SK-N-SH (cell line): ENCODE measurements at regions of chr7 and their contacts with region 1.

Region 1: GRCh38 chr7:25389489-25390106 is 161.3 kb upstream of the NPVF start:
- DNase-seq: peak; percentile 68
- H3K4me3 ChIP-seq: no peak overlapping the region
- H3K27ac ChIP-seq: no peak overlapping the region
- H3K4me1 ChIP-seq: peaks cover 0 to 20% of the 10 kb centered on the region in 2 experiments; a peak in 2 of 4 replicates
- H3K27me3 ChIP-seq: no peaks in the 10 kb centered on the region
- CTCF ChIP-seq: peak; percentile 73
- EP300 ChIP-seq: no peak
- RAD21 ChIP-seq: peak; percentile 88

Region 2: DNA sequence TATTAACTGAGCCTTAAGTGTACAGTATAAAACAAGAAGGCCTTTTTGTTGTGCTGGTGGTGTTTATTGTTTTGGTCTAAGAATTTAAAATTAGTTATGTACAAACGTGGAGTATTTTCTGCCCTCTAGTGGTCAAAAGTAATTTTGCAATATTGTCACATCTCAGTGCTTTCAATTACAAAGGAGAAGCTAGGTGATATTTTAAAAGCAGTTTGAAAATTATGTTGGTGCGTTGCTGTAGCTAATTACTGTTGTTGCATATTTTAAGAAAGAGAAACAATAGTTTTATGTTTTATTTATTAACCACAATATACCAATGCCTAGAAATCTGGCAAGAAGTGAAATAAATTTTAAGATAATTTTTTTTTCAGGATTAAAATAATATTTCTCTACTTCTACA is 172.8 kb before region 1 on chr7:
- CTCF ChIA-PET with region 1: interaction called, 15 read pairs
- POLR2A ChIA-PET with region 1: no interaction called
- DNase-seq: peak; percentile 48
- H3K4me3 ChIP-seq: no peak overlapping the region; a peak in 1 of 4 replicates
- H3K27ac ChIP-seq: no peak overlapping the region
- H3K4me1 ChIP-seq: peaks cover 0 to 2% of the 10 kb centered on the region in 2 experiments; a peak in 1 of 4 replicates
- H3K27me3 ChIP-seq: peaks cover 8% of the 10 kb centered on the region; the same call in 1 of the 2 replicates
- CTCF ChIP-seq: peak; percentile 99
- EP300 ChIP-seq: no peak
- RAD21 ChIP-seq: peak; percentile 49; the same call in 1 of the 2 replicates

Region 3: GRCh38 chr7:25259587-25260243 is 129.9 kb before region 1 on chr7:
- CTCF ChIA-PET with region 1: interaction called, 526 read pairs
- POLR2A ChIA-PET with region 1: no interaction called
- DNase-seq: peak; percentile 79
- H3K4me3 ChIP-seq: peak overlapping the region in 1 of 2 experiments; percentile 15; a peak in 1 of 4 replicates
- H3K27ac ChIP-seq: no peak overlapping the region
- H3K4me1 ChIP-seq: peaks cover 0 to 4% of the 10 kb centered on the region in 2 experiments; a peak in 2 of 4 replicates
- H3K27me3 ChIP-seq: peaks cover 10% of the 10 kb centered on the region; the same call in 1 of the 2 replicates
- CTCF ChIP-seq: peak; percentile 94
- EP300 ChIP-seq: no peak
- RAD21 ChIP-seq: peak; percentile 99

Region 4: GRCh38 chr7:25369786-25370185 is 19.8 kb before region 1 on chr7:
- CTCF ChIA-PET with region 1: interaction called, 61 read pairs
- POLR2A ChIA-PET with region 1: no interaction called
- DNase-seq: no peak
- H3K4me3 ChIP-seq: no peak overlapping the region
- H3K27ac ChIP-seq: no peak overlapping the region
- H3K4me1 ChIP-seq: no peaks in the 10 kb centered on the region; a peak in 1 of 4 replicates
- H3K27me3 ChIP-seq: no peaks in the 10 kb centered on the region; the same call in 1 of the 2 replicates
- CTCF ChIP-seq: no peak
- EP300 ChIP-seq: no peak
- RAD21 ChIP-seq: no peak

Region 5: DNA sequence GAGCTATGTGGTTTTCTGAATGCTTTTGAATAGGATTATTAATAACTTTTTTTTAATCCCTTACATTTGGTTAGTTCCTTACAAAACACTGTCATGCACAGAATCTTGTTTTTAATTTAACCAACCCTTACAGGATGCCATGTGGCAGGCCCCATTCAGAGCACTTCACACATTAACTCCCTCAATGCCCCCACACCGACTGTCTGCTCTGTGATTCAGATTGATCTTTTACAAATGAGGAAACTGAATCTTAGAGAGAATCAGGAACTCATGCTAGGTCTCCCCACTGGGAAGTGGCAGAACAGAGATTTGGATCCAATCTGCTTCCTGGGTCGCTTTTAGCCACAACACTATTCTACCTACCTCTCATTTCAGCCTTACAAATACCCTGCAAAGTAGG is 34.5 kb after region 1 on chr7:
- CTCF ChIA-PET with region 1: interaction called, 11 read pairs
- POLR2A ChIA-PET with region 1: no interaction called
- DNase-seq: no peak
- H3K4me3 ChIP-seq: no peak overlapping the region
- H3K27ac ChIP-seq: no peak overlapping the region
- H3K4me1 ChIP-seq: peaks cover 0 to 2% of the 10 kb centered on the region in 2 experiments; a peak in 1 of 4 replicates
- H3K27me3 ChIP-seq: no peaks in the 10 kb centered on the region
- CTCF ChIP-seq: no peak
- EP300 ChIP-seq: no peak
- RAD21 ChIP-seq: no peak

Region 6: GRCh38 chr7:25557379-25557917 is 167.8 kb after region 1 on chr7:
- CTCF ChIA-PET with region 1: interaction called, 766 read pairs
- POLR2A ChIA-PET with region 1: interaction called, 3 read pairs
- DNase-seq: no peak
- H3K4me3 ChIP-seq: no peak overlapping the region
- H3K27ac ChIP-seq: no peak overlapping the region
- H3K4me1 ChIP-seq: peaks cover 0 to 3% of the 10 kb centered on the region in 2 experiments; a peak in 1 of 4 replicates
- H3K27me3 ChIP-seq: no peaks in the 10 kb centered on the region
- CTCF ChIP-seq: no peak
- EP300 ChIP-seq: no peak
- RAD21 ChIP-seq: no peak